AG04449 (cell line): ENCODE measurements at regions of chr3 and their contacts with region 1.

Region 1: GRCh38 chr3:119240591-119241434 is at the start of gene B4GALT4:
- DNase-seq: no peak
- H3K4me3 ChIP-seq: peak within 1 kb of the TSS; percentile 79
- CTCF ChIP-seq: no peak

Region 2: GRCh38 chr3:118501152-118501551 is 739.7 kb before region 1 on chr3:
- CTCF ChIA-PET with region 1: no interaction called
- POLR2A ChIA-PET with region 1: no interaction called
- DNase-seq: no peak
- H3K4me3 ChIP-seq: no peak overlapping the region
- CTCF ChIP-seq: no peak

Region 3: GRCh38 chr3:119145500-119146191 is 95.2 kb before region 1 on chr3 and contains the start of gene TEX55:
- CTCF ChIA-PET with region 1: interaction called, 173 read pairs
- POLR2A ChIA-PET with region 1: interaction called, 4 read pairs
- DNase-seq: no peak
- H3K4me3 ChIP-seq: no peak within 1 kb of the TSS
- CTCF ChIP-seq: peak; percentile 75

Region 4: DNA sequence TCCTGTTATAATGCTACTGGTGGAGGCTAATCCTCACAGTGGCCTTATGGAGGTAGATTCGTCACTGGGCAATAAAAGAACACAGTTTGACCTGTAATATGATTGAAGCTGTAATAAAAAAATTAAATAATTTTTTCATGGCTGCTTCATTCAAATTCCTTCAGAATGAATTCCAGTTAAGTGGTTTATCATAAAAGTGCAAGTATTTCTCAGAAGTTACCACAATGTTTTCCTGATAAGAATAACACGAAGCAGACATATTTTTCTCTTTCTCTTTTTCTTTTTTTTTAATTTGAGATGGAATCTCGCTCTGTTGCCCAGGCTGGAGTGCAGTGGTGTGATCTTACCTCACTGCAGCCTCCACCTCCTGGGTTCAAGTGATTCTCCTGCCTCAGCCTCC is 15.7 kb before region 1 on chr3:
- CTCF ChIA-PET with region 1: interaction called, 12 read pairs
- POLR2A ChIA-PET with region 1: interaction called, 4 read pairs
- DNase-seq: no peak
- H3K4me3 ChIP-seq: no peak overlapping the region
- CTCF ChIP-seq: no peak

Region 5: DNA sequence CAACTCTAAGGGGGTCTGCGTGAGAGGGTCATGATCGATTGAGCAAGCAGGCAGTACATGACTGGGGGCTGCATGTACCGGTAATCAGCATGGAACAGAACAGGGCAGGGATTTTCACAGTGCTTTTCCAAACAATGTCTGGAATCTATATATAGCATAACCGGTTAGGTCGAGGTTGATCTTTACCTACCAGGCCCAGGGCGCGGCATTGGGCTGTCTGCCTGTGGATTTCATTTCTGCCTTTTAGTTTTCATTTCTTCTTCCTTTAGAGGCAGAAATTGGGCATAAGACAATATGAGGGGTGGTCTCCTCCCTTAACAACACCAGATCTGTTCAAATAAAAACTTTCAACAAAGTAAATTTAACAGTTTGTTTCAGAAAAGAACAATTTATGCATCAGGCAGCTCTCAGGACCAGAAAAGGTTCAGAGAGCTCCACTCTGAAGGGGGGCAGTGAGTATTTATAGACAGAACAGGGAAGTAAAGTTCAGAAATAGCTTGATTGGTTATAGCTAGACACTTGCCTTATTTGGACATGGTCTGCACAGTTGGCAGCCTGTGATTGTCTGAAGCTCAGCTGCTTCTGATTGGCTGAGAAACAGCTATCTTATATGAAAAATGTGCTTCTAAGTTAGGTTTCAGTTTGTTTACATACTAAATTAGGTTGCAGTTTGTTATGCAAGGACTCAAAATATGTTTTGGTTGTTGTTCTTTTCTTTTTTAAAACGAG is 17.0 kb after region 1 on chr3:
- CTCF ChIA-PET with region 1: interaction called, 13 read pairs
- POLR2A ChIA-PET with region 1: interaction called, 4 read pairs
- DNase-seq: no peak
- H3K4me3 ChIP-seq: no peak overlapping the region
- CTCF ChIP-seq: no peak

Region 6: GRCh38 chr3:119279101-119279554 is 38.3 kb after region 1 on chr3:
- CTCF ChIA-PET with region 1: interaction called, 14 read pairs
- POLR2A ChIA-PET with region 1: no interaction called
- DNase-seq: no peak
- H3K4me3 ChIP-seq: no peak overlapping the region
- CTCF ChIP-seq: no peak

Region 7: GRCh38 chr3:119352849-119353502 is 112.2 kb after region 1 on chr3:
- CTCF ChIA-PET with region 1: interaction called, 10 read pairs
- POLR2A ChIA-PET with region 1: no interaction called
- DNase-seq: peak; percentile 52
- H3K4me3 ChIP-seq: no peak overlapping the region
- CTCF ChIP-seq: peak; percentile 26